RWPE1 (cell line): ENCODE measurements at regions of chr17 and their contacts with region 1.

Region 1: GRCh38 chr17:18117982-18118975 is 9.7 kb downstream of the MYO15A start:
- DNase-seq: no peak
- H3K27ac ChIP-seq: no peak overlapping the region
- CTCF ChIP-seq: no peak

Region 2: DNA sequence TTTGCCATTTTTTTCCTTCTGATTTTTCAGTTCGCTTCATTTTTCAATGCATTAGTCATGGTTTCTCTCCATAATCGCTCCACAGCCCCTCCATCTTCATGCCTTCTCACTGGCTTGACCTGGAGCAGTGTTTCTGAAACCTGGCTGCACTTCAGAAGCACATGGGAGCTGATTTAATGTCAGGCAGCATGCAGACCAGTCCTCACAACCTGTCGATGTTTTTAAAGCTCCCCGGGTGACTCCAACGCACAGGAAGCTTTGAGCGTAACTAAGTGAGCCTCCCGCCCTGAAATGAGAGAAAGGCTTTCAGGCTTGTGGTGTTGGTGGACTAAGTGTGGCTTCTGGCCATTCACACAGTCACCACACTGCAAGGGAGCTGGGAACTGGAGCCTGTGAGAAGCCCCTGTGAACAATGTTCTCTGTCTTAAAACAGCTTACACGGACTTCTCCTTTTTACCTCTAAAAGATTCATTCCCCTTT is 47.4 kb before region 1 on chr17:
- CTCF ChIA-PET with region 1: no interaction called
- POLR2A ChIA-PET with region 1: interaction called, 11 read pairs
- DNase-seq: no peak
- H3K27ac ChIP-seq: no peak overlapping the region
- CTCF ChIP-seq: no peak

Region 3: DNA sequence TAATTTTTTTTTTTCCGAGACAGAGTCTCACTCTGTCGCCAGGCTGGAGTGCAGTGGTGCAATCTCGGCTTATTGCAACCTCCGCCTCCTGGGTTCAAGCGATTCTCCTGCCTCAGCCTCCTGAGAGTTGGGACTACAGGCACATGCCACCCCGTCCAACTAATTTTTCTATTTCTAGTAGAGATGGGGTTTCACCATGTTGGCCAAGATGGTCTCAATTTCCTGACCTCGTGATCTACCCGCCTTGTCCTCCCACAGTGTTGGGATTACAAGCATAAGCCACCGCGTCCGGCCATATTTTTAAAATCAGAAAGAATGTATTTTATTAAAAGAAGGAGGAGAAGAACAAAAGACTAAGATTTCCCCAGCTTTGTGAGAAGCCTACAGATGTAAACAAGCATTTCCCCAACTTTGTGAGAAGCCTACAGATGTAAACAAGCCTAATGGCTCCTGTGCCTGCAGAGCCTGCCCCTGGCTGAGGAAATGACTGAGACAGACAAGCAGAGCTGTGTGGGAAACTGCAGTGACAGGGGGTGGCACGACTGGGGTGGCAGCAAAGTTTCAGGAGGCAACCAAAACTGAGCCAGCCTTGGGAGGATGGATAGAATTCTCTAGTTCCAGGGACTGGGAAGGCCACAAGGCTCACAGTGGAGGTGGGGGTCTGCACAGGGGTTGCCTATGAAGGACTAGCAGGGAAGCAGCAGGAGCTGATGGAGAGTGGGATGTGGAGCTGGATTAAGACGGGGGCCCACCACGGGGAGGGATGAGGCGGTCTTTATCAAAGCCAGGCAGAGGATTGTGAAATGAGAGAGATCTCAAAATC is 173.7 kb after region 1 on chr17:
- CTCF ChIA-PET with region 1: no interaction called
- POLR2A ChIA-PET with region 1: no interaction called
- DNase-seq: no peak
- H3K27ac ChIP-seq: no peak overlapping the region
- CTCF ChIP-seq: no peak